ENCODE measurements at regions of chr17 and their contacts with region 1.

Region 1: GRCh38 chr17:4573669-4574068 is 10.7 kb upstream of the SMTNL2 start:
- DNase-seq: peak in 1 of 3 donors; percentile 66
- ATAC-seq: peak in 2 of 4 donors; percentile 18 to 66
- H3K4me3 ChIP-seq: no peak overlapping the region
- H3K27ac ChIP-seq: no peak overlapping the region
- H3K4me1 ChIP-seq: no peaks in the 10 kb centered on the region
- H3K27me3 ChIP-seq: no peaks in the 10 kb centered on the region
- CTCF ChIP-seq: no peak
- POLR2A ChIP-seq: no peak

Region 2: DNA sequence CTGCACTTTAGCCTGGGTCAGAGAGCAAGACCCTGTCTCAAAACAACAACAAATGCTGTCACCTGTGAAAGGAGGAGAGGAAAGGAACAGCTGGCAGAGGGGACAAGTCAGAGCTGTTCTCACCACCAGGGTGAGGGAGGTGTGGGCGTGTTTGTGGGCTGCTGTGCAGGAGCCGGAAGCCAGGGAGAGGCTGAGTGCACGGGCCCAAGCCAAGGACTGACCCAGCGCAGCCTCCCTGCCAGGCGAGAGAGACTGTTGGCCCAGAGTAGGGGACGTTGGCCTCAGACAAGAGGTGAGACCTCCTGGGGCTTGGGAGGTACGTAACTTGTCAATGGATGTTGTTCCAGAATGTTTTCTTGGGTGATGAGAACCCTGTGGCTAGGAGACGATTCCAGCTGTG is 64.3 kb before region 1 on chr17:
- intact Hi-C with region 1: no loop called
- DNase-seq: no peak
- ATAC-seq: peak; percentile 24 to 46 (median 32)
- H3K4me3 ChIP-seq: no peak overlapping the region
- H3K27ac ChIP-seq: peak overlapping the region in 2 of 3 donors; percentile 12 to 65
- H3K4me1 ChIP-seq: no peaks in the 10 kb centered on the region
- H3K27me3 ChIP-seq: no peaks in the 10 kb centered on the region
- CTCF ChIP-seq: no peak
- POLR2A ChIP-seq: no peak

Region 3: GRCh38 chr17:4625181-4625617 is 51.5 kb after region 1 on chr17:
- intact Hi-C with region 1: loop called (anchors 5 to 10 kb)
- DNase-seq: no peak
- ATAC-seq: no peak
- H3K4me3 ChIP-seq: no peak overlapping the region
- H3K27ac ChIP-seq: no peak overlapping the region
- H3K4me1 ChIP-seq: no peaks in the 10 kb centered on the region
- H3K27me3 ChIP-seq: no peaks in the 10 kb centered on the region
- CTCF ChIP-seq: no peak
- POLR2A ChIP-seq: no peak

Region 4: GRCh38 chr17:4648741-4649140 is 75.1 kb after region 1 on chr17:
- intact Hi-C with region 1: no loop called
- DNase-seq: peak in 1 of 3 donors; percentile 83
- ATAC-seq: peak; percentile 93 to 95 (median 94)
- H3K4me3 ChIP-seq: no peak overlapping the region
- H3K27ac ChIP-seq: no peak overlapping the region
- H3K4me1 ChIP-seq: peaks cover 0 to 21% (median 8%) of the 10 kb centered on the region in 4 donors
- H3K27me3 ChIP-seq: no peaks in the 10 kb centered on the region
- CTCF ChIP-seq: no peak
- POLR2A ChIP-seq: no peak

Region 5: GRCh38 chr17:4709794-4710692 is 136.4 kb after region 1 on chr17 and contains the start of gene ARRB2:
- intact Hi-C with region 1: loop called in 1 of 2 experiments (anchors 10 kb)
- DNase-seq: peak; percentile 99
- ATAC-seq: peak; percentile 82 to 91 (median 84)
- H3K4me3 ChIP-seq: peak within 1 kb of the TSS; percentile 58 to 65 (median 58)
- H3K27ac ChIP-seq: peak within 1 kb of the TSS; percentile 74 to 89 (median 77)
- H3K4me1 ChIP-seq: peaks cover 0 to 31% (median 16%) of the 10 kb centered on the region in 4 donors
- H3K27me3 ChIP-seq: no peaks in the 10 kb centered on the region
- CTCF ChIP-seq: peak; percentile 66 to 78 (median 70)
- POLR2A ChIP-seq: peak; percentile 58
- total RNA-seq, gene ARRB2: 18.2 to 38.6 (median 23.9) TPM